ENCODE measurements at regions of chr19 and their contacts with region 1.

Region 1: DNA sequence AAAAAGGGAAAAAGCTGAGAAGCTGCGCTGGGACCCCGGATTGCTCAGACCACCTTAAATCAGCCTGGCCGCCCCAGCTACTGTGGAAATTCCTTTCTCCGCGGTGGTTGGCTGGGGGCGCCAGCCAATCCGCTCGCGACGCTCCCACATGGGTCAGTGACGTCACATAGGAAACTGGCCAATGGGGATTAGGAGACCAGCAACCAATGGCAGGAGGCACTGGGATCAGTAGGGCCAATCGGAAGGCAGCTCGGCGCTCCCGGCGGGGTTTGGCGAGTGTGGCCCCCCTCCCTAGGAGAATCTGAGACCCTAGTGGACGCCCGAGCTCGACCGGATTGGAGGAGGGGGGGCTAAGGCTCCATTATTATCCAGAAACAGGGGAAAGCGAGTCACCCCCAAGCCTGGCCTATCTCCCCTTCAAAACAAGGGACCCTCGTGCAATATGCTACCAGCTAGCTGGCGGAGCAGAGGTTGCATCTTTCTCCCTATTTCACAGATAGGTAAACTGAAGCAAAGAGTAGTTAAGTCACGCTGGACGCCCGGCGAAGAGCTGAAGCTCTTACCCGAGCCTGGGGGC is 6.5 kb upstream of the TLE2 start:
- DNase-seq: peak; percentile 86 to 97 (median 95)
- H3K4me3 ChIP-seq: peak overlapping the region; percentile 99
- H3K4me3 Mint-ChIP-seq: peak overlapping the region; percentile 87 to 98 (median 93)
- H3K27ac ChIP-seq: peak overlapping the region; percentile 82
- H3K27ac Mint-ChIP-seq: peak overlapping the region; percentile 89 to 100 (median 97)
- H3K4me1 ChIP-seq: peaks cover 16% of the 10 kb centered on the region
- H3K4me1 Mint-ChIP-seq: peaks cover 20 to 37% (median 23%) of the 10 kb centered on the region in 3 donors
- H3K27me3 ChIP-seq: no peaks in the 10 kb centered on the region
- H3K27me3 Mint-ChIP-seq: peaks cover 0 to 8% of the 10 kb centered on the region in 2 donors

Region 2: GRCh38 chr19:2923510-2923909 is 112.1 kb before region 1 on chr19:
- CTCF ChIA-PET with region 1: no interaction called
- POLR2A ChIA-PET with region 1: no interaction called
- DNase-seq: no peak
- H3K4me3 ChIP-seq: no peak overlapping the region
- H3K4me3 Mint-ChIP-seq: no peak overlapping the region
- H3K27ac ChIP-seq: no peak overlapping the region
- H3K27ac Mint-ChIP-seq: peak overlapping the region in 1 of 8 donors; percentile 20
- H3K4me1 ChIP-seq: no peaks in the 10 kb centered on the region
- H3K4me1 Mint-ChIP-seq: no peaks in the 10 kb centered on the region
- H3K27me3 ChIP-seq: no peaks in the 10 kb centered on the region
- H3K27me3 Mint-ChIP-seq: no peaks in the 10 kb centered on the region

Region 3: DNA sequence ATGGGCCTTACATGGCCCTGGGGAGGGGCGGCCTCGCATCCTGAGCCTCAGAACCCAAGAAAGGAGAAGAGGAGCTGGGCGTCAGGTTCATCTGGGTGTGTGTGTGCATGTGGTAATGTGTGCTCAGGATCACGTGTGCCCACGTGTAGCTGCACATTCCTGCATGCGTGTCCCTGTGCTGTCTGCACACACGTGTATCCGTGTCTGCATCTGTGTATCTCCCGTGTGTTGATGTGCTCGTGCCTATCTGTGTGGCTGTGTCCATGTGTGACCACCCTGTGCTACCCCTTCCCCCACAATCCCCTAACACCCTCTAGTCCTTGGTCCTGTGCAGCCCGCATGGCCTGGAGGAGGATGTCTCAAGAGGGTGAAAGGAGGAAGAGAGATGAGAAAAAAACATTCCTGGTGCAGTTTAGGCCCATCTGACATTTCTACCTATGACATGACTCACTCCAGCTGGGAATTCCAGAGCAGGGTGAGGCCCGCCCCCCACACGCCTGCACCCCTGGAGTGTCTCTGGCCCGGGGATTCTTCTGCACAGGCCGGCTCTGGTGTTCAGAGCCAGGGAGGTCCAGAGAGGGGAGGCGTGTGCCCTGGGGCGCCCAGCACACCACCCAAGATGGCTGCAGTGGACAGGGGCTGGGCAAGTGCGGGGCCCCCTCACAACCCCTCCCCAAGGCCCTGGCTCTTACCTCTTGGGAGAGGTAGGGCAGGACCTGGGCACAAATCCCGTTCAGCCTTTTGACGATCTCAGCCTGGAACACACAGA is 19.5 kb after region 1 on chr19:
- CTCF ChIA-PET with region 1: interaction called, 18 read pairs
- POLR2A ChIA-PET with region 1: interaction called, 86 read pairs
- DNase-seq: no peak
- H3K4me3 ChIP-seq: no peak overlapping the region
- H3K4me3 Mint-ChIP-seq: peak overlapping the region in 3 of 7 donors; percentile 28 to 58 (median 44)
- H3K27ac ChIP-seq: no peak overlapping the region
- H3K27ac Mint-ChIP-seq: peak overlapping the region in 5 of 8 donors; percentile 17 to 87 (median 72)
- H3K4me1 ChIP-seq: peaks cover 62% of the 10 kb centered on the region
- H3K4me1 Mint-ChIP-seq: peaks cover 29 to 52% (median 31%) of the 10 kb centered on the region in 3 donors
- H3K27me3 ChIP-seq: no peaks in the 10 kb centered on the region
- H3K27me3 Mint-ChIP-seq: no peaks in the 10 kb centered on the region

Region 4: GRCh38 chr19:3062168-3063102 is 26.8 kb after region 1 on chr19 and contains the start of gene TLE5:
- CTCF ChIA-PET with region 1: interaction called, 17 read pairs
- POLR2A ChIA-PET with region 1: interaction called, 86 read pairs
- DNase-seq: peak; percentile 67 to 85 (median 75)
- H3K4me3 ChIP-seq: peak within 1 kb of the TSS; percentile 97
- H3K4me3 Mint-ChIP-seq: peak within 1 kb of the TSS; percentile 89 to 96 (median 91)
- H3K27ac ChIP-seq: peak within 1 kb of the TSS; percentile 79
- H3K27ac Mint-ChIP-seq: peak within 1 kb of the TSS; percentile 87 to 99 (median 94)
- H3K4me1 ChIP-seq: peaks cover 49% of the 10 kb centered on the region
- H3K4me1 Mint-ChIP-seq: peaks cover 29 to 42% (median 40%) of the 10 kb centered on the region in 3 donors
- H3K27me3 ChIP-seq: no peaks in the 10 kb centered on the region
- H3K27me3 Mint-ChIP-seq: no peaks in the 10 kb centered on the region
- total RNA-seq, gene TLE5: 335 to 352 TPM

Region 5: GRCh38 chr19:3125900-3126524 is 90.4 kb after region 1 on chr19:
- CTCF ChIA-PET with region 1: no interaction called
- POLR2A ChIA-PET with region 1: no interaction called
- DNase-seq: peak; percentile 58 to 66 (median 63)
- H3K4me3 ChIP-seq: no peak overlapping the region
- H3K4me3 Mint-ChIP-seq: no peak overlapping the region
- H3K27ac ChIP-seq: no peak overlapping the region
- H3K27ac Mint-ChIP-seq: no peak overlapping the region
- H3K4me1 ChIP-seq: no peaks in the 10 kb centered on the region
- H3K4me1 Mint-ChIP-seq: peaks cover 0 to 5% (median 4%) of the 10 kb centered on the region in 3 donors
- H3K27me3 ChIP-seq: no peaks in the 10 kb centered on the region
- H3K27me3 Mint-ChIP-seq: peaks cover 0 to 6% of the 10 kb centered on the region in 2 donors